A549 (cell line): ENCODE measurements at regions of chr1 and their contacts with region 1.

Region 1: GRCh38 chr1:44775078-44775929 is at the start of gene RPS8:
- DNase-seq: peak; percentile 65 to 93
- ATAC-seq: peak; percentile 83 to 92
- H3K4me3 ChIP-seq: peak within 1 kb of the TSS; percentile 96
- H3K27ac ChIP-seq: peak within 1 kb of the TSS; percentile 98 to 99
- H3K4me1 ChIP-seq: peaks cover 22% of the 10 kb centered on the region
- CTCF ChIP-seq: no peak
- EP300 ChIP-seq: no peak
- POLR2A ChIP-seq: peak; percentile 97
- RAD21 ChIP-seq: no peak
- polyA plus RNA-seq, gene RPS8: 1,515 and 1,820 TPM in 2 replicates

Region 2: GRCh38 chr1:44200336-44200735 is 575.0 kb before region 1 on chr1:
- CTCF ChIA-PET with region 1: no interaction called
- POLR2A ChIA-PET with region 1: no interaction called
- DNase-seq: no peak
- ATAC-seq: no peak
- H3K4me3 ChIP-seq: no peak overlapping the region
- H3K27ac ChIP-seq: no peak overlapping the region
- H3K4me1 ChIP-seq: no peaks in the 10 kb centered on the region
- CTCF ChIP-seq: no peak
- EP300 ChIP-seq: no peak
- POLR2A ChIP-seq: no peak
- RAD21 ChIP-seq: no peak

Region 3: DNA sequence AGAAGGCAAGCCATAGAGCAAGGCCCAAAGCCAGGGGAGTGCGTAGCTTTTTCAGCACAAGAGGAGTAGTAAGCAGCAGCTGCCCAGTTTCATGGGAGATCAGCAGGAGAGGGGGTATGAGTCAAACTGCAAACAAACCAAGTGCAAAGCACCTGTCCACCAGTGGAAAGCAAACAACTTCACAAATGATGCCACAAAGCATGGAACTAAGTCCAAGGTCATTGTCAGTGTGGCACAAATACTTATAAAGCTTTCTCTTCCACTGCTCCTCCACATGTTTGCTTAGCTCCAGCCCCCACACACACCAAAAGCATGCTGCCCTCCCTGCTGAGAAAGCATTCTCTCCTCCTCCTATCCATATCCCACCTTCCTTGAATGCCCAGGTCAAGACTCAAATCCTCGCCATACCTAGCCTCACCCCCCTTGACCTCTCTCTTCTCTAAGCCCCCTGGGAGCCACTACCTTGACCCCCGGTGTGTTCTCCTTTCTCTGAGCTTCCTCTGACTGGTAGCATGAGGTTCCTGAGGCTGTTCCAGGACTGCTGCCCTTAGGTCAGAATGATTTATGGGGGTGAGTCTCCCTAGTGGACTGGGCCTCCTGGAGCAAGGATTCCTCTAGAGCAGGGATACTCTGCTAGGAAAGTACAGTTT is 491.7 kb before region 1 on chr1:
- CTCF ChIA-PET with region 1: no interaction called
- POLR2A ChIA-PET with region 1: no interaction called
- DNase-seq: peak; percentile 7 to 37
- ATAC-seq: peak; percentile 43 to 64; a peak in 3 of 6 replicates
- H3K4me3 ChIP-seq: no peak overlapping the region
- H3K27ac ChIP-seq: peak overlapping the region in 1 of 2 experiments; percentile 52; a peak in 3 of 6 replicates
- H3K4me1 ChIP-seq: peaks cover 18% of the 10 kb centered on the region
- CTCF ChIP-seq: no peak
- EP300 ChIP-seq: no peak
- POLR2A ChIP-seq: no peak
- RAD21 ChIP-seq: no peak

Region 4: GRCh38 chr1:44672254-44672955 is 102.9 kb before region 1 on chr1:
- CTCF ChIA-PET with region 1: no interaction called
- POLR2A ChIA-PET with region 1: no interaction called
- DNase-seq: no peak
- ATAC-seq: no peak
- H3K4me3 ChIP-seq: no peak overlapping the region
- H3K27ac ChIP-seq: no peak overlapping the region
- H3K4me1 ChIP-seq: peaks cover 25% of the 10 kb centered on the region
- CTCF ChIP-seq: no peak
- EP300 ChIP-seq: no peak
- POLR2A ChIP-seq: no peak
- RAD21 ChIP-seq: no peak

Region 5: GRCh38 chr1:44721485-44722361 is 53.6 kb before region 1 on chr1:
- CTCF ChIA-PET with region 1: no interaction called
- POLR2A ChIA-PET with region 1: interaction called, 16 read pairs
- DNase-seq: peak; percentile 93 to 95
- ATAC-seq: peak; percentile 96 to 98
- H3K4me3 ChIP-seq: no peak overlapping the region
- H3K27ac ChIP-seq: peak overlapping the region; percentile 84 to 90
- H3K4me1 ChIP-seq: peaks cover 8% of the 10 kb centered on the region; the same call in 1 of the 3 replicates
- CTCF ChIP-seq: no peak
- EP300 ChIP-seq: 0 out of 5 replicates have a peak, but pooled peaks of 1 of the 2 experiments have one; percentile 20
- POLR2A ChIP-seq: peak; percentile 100
- RAD21 ChIP-seq: no peak

Region 6: DNA sequence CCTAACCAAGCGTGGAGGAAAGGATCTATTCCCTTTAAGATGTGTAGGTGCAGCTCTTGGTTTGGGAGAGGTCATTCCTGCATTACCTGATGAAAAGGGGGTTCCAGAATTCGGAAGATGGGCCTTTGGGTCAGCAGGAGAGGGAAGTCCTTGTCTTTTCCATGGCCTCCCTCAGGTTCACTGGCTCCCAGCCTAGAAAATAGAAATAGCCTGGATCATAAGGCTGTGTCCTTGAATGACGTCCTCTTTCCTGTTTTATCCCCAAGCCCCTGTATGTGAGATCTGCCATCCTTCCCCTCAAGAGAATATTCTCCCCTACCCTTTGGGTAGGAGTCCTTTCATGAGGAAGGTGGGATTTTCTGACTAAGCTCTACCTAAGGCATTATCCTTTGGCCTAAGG is 14.4 kb before region 1 on chr1:
- CTCF ChIA-PET with region 1: interaction called, 4 read pairs
- POLR2A ChIA-PET with region 1: interaction called, 15 read pairs
- DNase-seq: no peak
- ATAC-seq: no peak
- H3K4me3 ChIP-seq: no peak overlapping the region
- H3K27ac ChIP-seq: no peak overlapping the region
- H3K4me1 ChIP-seq: no peaks in the 10 kb centered on the region
- CTCF ChIP-seq: no peak
- EP300 ChIP-seq: no peak
- POLR2A ChIP-seq: no peak
- RAD21 ChIP-seq: no peak

Region 7: GRCh38 chr1:44799770-44800584 is 24.7 kb after region 1 on chr1 and contains the start of gene PLK3:
- CTCF ChIA-PET with region 1: interaction called, 4 read pairs
- POLR2A ChIA-PET with region 1: interaction called, 10 read pairs
- DNase-seq: peak; percentile 79 to 96
- ATAC-seq: peak; percentile 88 to 91
- H3K4me3 ChIP-seq: peak within 1 kb of the TSS; percentile 98
- H3K27ac ChIP-seq: peak within 1 kb of the TSS; percentile 91 to 95
- H3K4me1 ChIP-seq: peaks cover 34% of the 10 kb centered on the region
- CTCF ChIP-seq: peak; percentile 64
- EP300 ChIP-seq: no peak
- POLR2A ChIP-seq: peak; percentile 85
- RAD21 ChIP-seq: peak; percentile 68 to 76
- polyA plus RNA-seq, gene PLK3: 12.6 and 16.0 TPM in 2 replicates

Region 8: DNA sequence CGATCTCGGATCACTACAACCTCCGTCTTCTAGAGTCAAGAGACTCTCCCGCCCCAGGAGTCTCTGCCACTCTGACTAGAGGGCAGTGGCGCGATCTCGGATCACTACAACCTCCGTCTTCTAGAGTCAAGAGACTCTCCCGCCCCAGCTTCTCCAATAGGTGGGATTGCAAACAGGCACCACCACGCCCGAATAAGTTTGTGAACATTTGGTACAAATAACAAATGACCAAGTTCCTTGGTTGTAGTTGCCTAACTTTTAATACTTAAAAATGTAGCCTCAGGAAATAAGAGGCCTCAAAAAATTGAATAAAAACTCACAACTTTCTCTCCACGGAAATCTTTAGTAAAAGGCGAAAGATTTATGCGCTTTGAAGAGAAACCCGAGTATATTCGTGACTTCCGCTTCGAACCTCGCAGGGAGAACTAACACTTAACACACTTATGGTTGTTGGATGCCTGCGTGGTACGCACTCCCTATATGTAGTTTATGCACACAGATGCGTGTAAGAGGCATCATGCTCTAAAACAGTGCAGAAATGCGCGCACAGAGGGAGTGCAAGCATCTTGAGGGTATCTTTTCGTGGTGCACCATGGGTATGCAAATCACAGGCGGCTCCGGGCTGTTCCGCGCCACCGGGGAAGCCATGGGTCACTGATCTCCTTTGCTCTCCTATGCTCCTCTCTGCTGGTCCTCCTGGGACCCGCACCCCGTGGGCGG is 44.5 kb after region 1 on chr1:
- CTCF ChIA-PET with region 1: interaction called, 3 read pairs
- POLR2A ChIA-PET with region 1: interaction called, 16 read pairs
- DNase-seq: peak; percentile 74 to 94
- ATAC-seq: peak; percentile 90 to 91
- H3K4me3 ChIP-seq: peak overlapping the region; percentile 51
- H3K27ac ChIP-seq: peak overlapping the region; percentile 97 to 98
- H3K4me1 ChIP-seq: peaks cover 12% of the 10 kb centered on the region; the same call in 2 of the 3 replicates
- CTCF ChIP-seq: no peak; the same call in 2 of the 3 replicates
- EP300 ChIP-seq: no peak
- POLR2A ChIP-seq: peak; percentile 93
- RAD21 ChIP-seq: peak; percentile 2 to 41; a peak in 3 of 5 replicates